GM12878 (cell line): ENCODE measurements at regions of chr14 and their contacts with region 1.

Region 1: GRCh38 chr14:30375296-30375892 is 183.6 kb upstream of the G2E3 start:
- DNase-seq: no peak
- ATAC-seq: peak; percentile 99
- H3K4me3 ChIP-seq: no peak overlapping the region
- H3K27ac ChIP-seq: no peak overlapping the region
- H3K4me1 ChIP-seq: no peaks in the 10 kb centered on the region
- H3K27me3 ChIP-seq: 0 out of 4 replicates have a peak, but pooled peaks cover 0 to 2% of the 10 kb centered on the region in 2 experiments
- CTCF ChIP-seq: peak; percentile 72 to 89 (median 87)
- EP300 ChIP-seq: no peak
- POLR2A ChIP-seq: no peak
- RAD21 ChIP-seq: peak; percentile 62

Region 2: DNA sequence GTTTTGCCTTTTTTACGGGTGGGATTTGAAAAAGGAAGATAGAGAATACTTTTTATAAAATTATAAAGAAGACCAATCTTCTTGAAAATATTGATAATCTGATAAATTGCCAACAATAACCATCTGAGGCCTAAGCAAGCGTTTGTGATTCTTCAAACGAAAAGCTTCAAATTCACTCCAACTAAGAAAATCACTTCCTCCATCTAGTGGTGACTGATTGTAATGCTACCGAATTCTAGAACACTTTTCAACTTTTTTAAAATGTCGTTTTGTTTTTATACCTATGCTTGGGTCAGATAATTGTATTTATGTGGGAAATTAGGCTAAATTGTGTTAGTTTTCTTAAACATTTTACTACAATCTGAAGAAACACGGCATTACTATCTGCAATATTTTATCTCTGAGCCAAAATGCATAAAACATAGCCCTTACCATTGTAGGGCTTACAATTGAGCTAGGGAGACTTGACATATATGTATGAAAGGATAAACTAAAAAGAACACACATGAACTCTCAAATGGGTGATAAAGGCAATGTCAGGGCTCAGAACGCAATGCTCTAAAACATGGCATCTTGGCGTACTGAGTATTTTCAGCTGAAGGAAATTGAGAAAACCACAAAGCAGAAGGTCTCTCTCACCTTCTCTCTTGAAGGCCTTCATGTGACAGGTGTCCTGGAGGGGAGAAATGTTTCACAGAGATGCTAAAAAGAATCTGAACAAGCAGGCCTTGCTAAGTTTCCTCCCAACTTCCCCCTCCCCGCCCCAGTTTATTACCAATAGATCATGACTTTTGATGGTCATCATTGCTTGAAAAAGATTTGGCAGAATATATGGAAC is 146.7 kb after region 1 on chr14:
- CTCF ChIA-PET with region 1: interaction called, 53 read pairs
- POLR2A ChIA-PET with region 1: no interaction called
- RAD21 ChIA-PET with region 1: interaction called, 19 read pairs
- SMC1A ChIA-PET with region 1: interaction called, 31 read pairs
- in situ Hi-C with region 1: no loop called
- intact Hi-C with region 1: loop called (anchors 1 kb)
- DNase-seq: peak; percentile 9
- ATAC-seq: peak; percentile 65
- H3K4me3 ChIP-seq: no peak overlapping the region
- H3K27ac ChIP-seq: no peak overlapping the region
- H3K4me1 ChIP-seq: no peaks in the 10 kb centered on the region
- H3K27me3 ChIP-seq: no peaks in the 10 kb centered on the region
- CTCF ChIP-seq: peak; percentile 65 to 70 (median 68)
- EP300 ChIP-seq: no peak
- POLR2A ChIP-seq: no peak
- RAD21 ChIP-seq: peak; percentile 64